Vagina (tissue), 2 donors: ENCODE measurements at regions of chr5 and their contacts with region 1.

Region 1: GRCh38 chr5:180831139-180832048 is 28.8 kb upstream of the MGAT1 start:
- DNase-seq: no peak
- H3K4me3 ChIP-seq: peak overlapping the region; percentile 86 to 96
- H3K27ac ChIP-seq: peak overlapping the region; percentile 98
- H3K4me1 ChIP-seq: peaks cover 51% of the 10 kb centered on the region
- H3K27me3 ChIP-seq: no peaks in the 10 kb centered on the region
- CTCF ChIP-seq: no peak
- POLR2A ChIP-seq: peak in 1 of 2 donors; percentile 85

Region 2: GRCh38 chr5:181243512-181244343 is 412.3 kb after region 1 on chr5 and contains the start of gene RACK1:
- intact Hi-C with region 1: loop called (anchors 10 kb)
- DNase-seq: peak in 1 of 2 donors; percentile 93
- H3K4me3 ChIP-seq: peak within 1 kb of the TSS; percentile 78 to 83
- H3K27ac ChIP-seq: peak within 1 kb of the TSS; percentile 95
- H3K4me1 ChIP-seq: peaks cover 69% of the 10 kb centered on the region
- H3K27me3 ChIP-seq: no peaks in the 10 kb centered on the region
- CTCF ChIP-seq: no peak
- POLR2A ChIP-seq: peak in 1 of 2 donors; percentile 48
- total RNA-seq, gene RACK1: 3,043 TPM